ENCODE measurements at regions of chr2 and their contacts with region 1.

Region 1: GRCh38 chr2:161223139-161223732 is 63.0 kb downstream of the TANK start:
- DNase-seq: no peak
- ATAC-seq: peak; percentile 67
- H3K4me3 Mint-ChIP-seq: no peak overlapping the region
- H3K27ac Mint-ChIP-seq: no peak overlapping the region
- H3K4me1 Mint-ChIP-seq: peaks cover 2% of the 10 kb centered on the region
- H3K27me3 Mint-ChIP-seq: no peaks in the 10 kb centered on the region
- CTCF ChIP-seq: no peak

Region 2: GRCh38 chr2:161193633-161194032 is 29.6 kb before region 1 on chr2:
- CTCF ChIA-PET with region 1: no interaction called
- POLR2A ChIA-PET with region 1: no interaction called
- intact Hi-C with region 1: no loop called
- DNase-seq: no peak
- ATAC-seq: no peak
- H3K4me3 Mint-ChIP-seq: no peak overlapping the region
- H3K27ac Mint-ChIP-seq: no peak overlapping the region
- H3K4me1 Mint-ChIP-seq: peaks cover 73% of the 10 kb centered on the region
- H3K27me3 Mint-ChIP-seq: no peaks in the 10 kb centered on the region
- CTCF ChIP-seq: no peak

Region 3: DNA sequence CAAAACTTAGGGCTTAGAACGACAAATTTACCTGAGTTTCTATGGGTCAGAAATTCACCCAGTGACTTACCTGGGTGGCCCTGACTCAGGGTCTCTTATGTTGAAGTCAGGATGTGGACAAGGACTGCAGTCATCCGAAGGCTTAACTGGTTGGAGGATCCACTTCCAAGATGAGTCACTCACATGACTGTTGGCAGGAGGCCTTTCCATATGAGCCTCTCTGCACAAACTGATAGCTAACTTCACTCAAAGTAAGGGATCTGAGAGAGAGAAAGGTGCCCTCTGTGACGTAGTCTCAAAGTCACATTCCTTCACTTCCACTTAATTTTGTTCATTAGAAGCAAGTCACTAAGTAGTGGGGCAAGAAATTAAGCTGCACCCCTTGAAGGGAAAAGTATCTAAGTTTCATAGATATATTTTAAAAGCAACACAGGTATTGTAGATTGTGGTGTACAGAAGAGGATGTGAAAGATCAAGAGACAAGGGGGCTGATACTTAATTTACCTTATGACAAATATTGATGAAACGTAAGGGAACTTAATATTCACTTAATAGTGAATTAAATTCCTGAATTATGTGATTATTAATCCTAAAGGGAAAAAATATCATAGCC is 14.6 kb before region 1 on chr2:
- CTCF ChIA-PET with region 1: interaction called, 3 read pairs
- POLR2A ChIA-PET with region 1: no interaction called
- intact Hi-C with region 1: loop called (anchors 2 kb)
- DNase-seq: no peak
- ATAC-seq: no peak
- H3K4me3 Mint-ChIP-seq: no peak overlapping the region
- H3K27ac Mint-ChIP-seq: no peak overlapping the region
- H3K4me1 Mint-ChIP-seq: peaks cover 16% of the 10 kb centered on the region
- H3K27me3 Mint-ChIP-seq: no peaks in the 10 kb centered on the region
- CTCF ChIP-seq: no peak

Region 4: GRCh38 chr2:161238560-161239325 is 15.5 kb after region 1 on chr2:
- CTCF ChIA-PET with region 1: interaction called, 16 read pairs
- POLR2A ChIA-PET with region 1: interaction called, 3 read pairs
- intact Hi-C with region 1: no loop called
- DNase-seq: peak; percentile 41
- ATAC-seq: peak; percentile 45
- H3K4me3 Mint-ChIP-seq: peak overlapping the region; percentile 86
- H3K27ac Mint-ChIP-seq: peak overlapping the region; percentile 54
- H3K4me1 Mint-ChIP-seq: peaks cover 55% of the 10 kb centered on the region
- H3K27me3 Mint-ChIP-seq: peaks cover 2% of the 10 kb centered on the region
- CTCF ChIP-seq: no peak

Region 5: GRCh38 chr2:161250864-161251436 is 27.7 kb after region 1 on chr2:
- CTCF ChIA-PET with region 1: no interaction called
- POLR2A ChIA-PET with region 1: interaction called, 3 read pairs
- intact Hi-C with region 1: loop called (anchors 2 kb)
- DNase-seq: no peak
- ATAC-seq: no peak
- H3K4me3 Mint-ChIP-seq: no peak overlapping the region
- H3K27ac Mint-ChIP-seq: no peak overlapping the region
- H3K4me1 Mint-ChIP-seq: peaks cover 21% of the 10 kb centered on the region
- H3K27me3 Mint-ChIP-seq: no peaks in the 10 kb centered on the region
- CTCF ChIP-seq: no peak

Region 6: GRCh38 chr2:161946489-161947107 is 723.4 kb after region 1 on chr2:
- CTCF ChIA-PET with region 1: no interaction called
- POLR2A ChIA-PET with region 1: no interaction called
- intact Hi-C with region 1: loop called (anchors 5 kb)
- DNase-seq: no peak
- ATAC-seq: no peak
- H3K4me3 Mint-ChIP-seq: no peak overlapping the region
- H3K27ac Mint-ChIP-seq: no peak overlapping the region
- H3K4me1 Mint-ChIP-seq: no peaks in the 10 kb centered on the region
- H3K27me3 Mint-ChIP-seq: no peaks in the 10 kb centered on the region
- CTCF ChIP-seq: no peak

Region 7: GRCh38 chr2:162123806-162124758 is 900.8 kb after region 1 on chr2:
- CTCF ChIA-PET with region 1: no interaction called
- POLR2A ChIA-PET with region 1: no interaction called
- intact Hi-C with region 1: loop called (anchors 5 kb)
- DNase-seq: no peak
- ATAC-seq: peak; percentile 53
- H3K4me3 Mint-ChIP-seq: no peak overlapping the region
- H3K27ac Mint-ChIP-seq: no peak overlapping the region
- H3K4me1 Mint-ChIP-seq: peaks cover 18% of the 10 kb centered on the region
- H3K27me3 Mint-ChIP-seq: no peaks in the 10 kb centered on the region
- CTCF ChIP-seq: peak; percentile 77

Measured in activated B cell treated with CpG ODN at 0.5 μM for 24 hours (primary cell).